IMR-90 (cell line): ENCODE measurements at regions of chr1 and their contacts with region 1.

Region 1: GRCh38 chr1:30801771-30802198 is 44.2 kb upstream of the LAPTM5 start:
- DNase-seq: peak; percentile 48
- ATAC-seq: peak; percentile 91
- H3K4me3 ChIP-seq: no peak overlapping the region
- H3K27ac ChIP-seq: no peak overlapping the region
- H3K4me1 ChIP-seq: peaks cover 9% of the 10 kb centered on the region; the same call in 1 of the 2 replicates
- H3K27me3 ChIP-seq: no peaks in the 10 kb centered on the region
- CTCF ChIP-seq: peak; percentile 96
- POLR2A ChIP-seq: peak; percentile 45; the same call in 1 of the 2 replicates
- RAD21 ChIP-seq: peak; percentile 98

Region 2: DNA sequence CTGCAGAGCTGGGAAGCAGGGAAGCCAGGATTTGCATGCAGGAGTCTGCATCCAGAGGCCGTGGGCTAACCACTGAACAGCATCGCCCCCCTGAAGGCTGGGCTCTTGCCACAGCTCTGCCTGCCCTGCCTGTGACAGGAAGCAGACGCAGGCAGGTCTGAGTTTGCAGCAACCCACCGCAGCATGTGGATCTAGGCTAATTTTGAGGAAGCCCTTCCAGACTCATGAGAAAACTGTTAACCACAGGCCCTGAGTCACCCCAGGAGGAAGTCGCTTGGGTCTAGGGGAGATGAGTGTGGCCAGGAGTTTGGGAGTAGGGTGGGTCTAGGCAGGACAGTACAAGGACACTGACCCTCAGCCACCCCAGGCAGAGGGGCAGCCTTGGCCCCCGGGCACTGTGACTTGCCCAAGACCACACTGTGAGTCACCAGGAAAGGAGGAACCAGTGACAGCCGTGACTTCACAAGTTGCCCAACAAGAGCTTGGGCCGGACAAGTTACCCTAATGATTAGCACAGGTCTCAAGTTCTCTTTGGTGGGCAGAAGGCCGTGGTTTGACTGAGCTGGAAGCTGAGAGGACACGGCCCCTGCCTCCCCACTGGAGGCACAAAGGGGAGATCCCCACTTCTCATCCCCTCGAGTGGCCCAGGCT is 45.1 kb before region 1 on chr1:
- CTCF ChIA-PET with region 1: no interaction called
- POLR2A ChIA-PET with region 1: no interaction called
- dilution Hi-C with region 1: no loop called
- in situ Hi-C with region 1: no loop called
- intact Hi-C with region 1: no loop called
- DNase-seq: peak; percentile 82
- ATAC-seq: peak; percentile 80
- H3K4me3 ChIP-seq: no peak overlapping the region
- H3K27ac ChIP-seq: no peak overlapping the region
- H3K4me1 ChIP-seq: peaks cover 6% of the 10 kb centered on the region
- H3K27me3 ChIP-seq: peaks cover 9% of the 10 kb centered on the region
- CTCF ChIP-seq: no peak
- POLR2A ChIP-seq: no peak
- RAD21 ChIP-seq: no peak

Region 3: GRCh38 chr1:30847358-30847972 is 45.7 kb after region 1 on chr1:
- CTCF ChIA-PET with region 1: no interaction called
- POLR2A ChIA-PET with region 1: no interaction called
- dilution Hi-C with region 1: no loop called
- in situ Hi-C with region 1: no loop called
- intact Hi-C with region 1: no loop called
- DNase-seq: peak; percentile 79
- ATAC-seq: peak; percentile 77
- H3K4me3 ChIP-seq: no peak overlapping the region
- H3K27ac ChIP-seq: peak overlapping the region; percentile 3; the same call in 1 of the 2 replicates
- H3K4me1 ChIP-seq: peaks cover 4% of the 10 kb centered on the region; the same call in 1 of the 2 replicates
- H3K27me3 ChIP-seq: peaks cover 11% of the 10 kb centered on the region
- CTCF ChIP-seq: no peak
- POLR2A ChIP-seq: no peak
- RAD21 ChIP-seq: no peak

Region 4: DNA sequence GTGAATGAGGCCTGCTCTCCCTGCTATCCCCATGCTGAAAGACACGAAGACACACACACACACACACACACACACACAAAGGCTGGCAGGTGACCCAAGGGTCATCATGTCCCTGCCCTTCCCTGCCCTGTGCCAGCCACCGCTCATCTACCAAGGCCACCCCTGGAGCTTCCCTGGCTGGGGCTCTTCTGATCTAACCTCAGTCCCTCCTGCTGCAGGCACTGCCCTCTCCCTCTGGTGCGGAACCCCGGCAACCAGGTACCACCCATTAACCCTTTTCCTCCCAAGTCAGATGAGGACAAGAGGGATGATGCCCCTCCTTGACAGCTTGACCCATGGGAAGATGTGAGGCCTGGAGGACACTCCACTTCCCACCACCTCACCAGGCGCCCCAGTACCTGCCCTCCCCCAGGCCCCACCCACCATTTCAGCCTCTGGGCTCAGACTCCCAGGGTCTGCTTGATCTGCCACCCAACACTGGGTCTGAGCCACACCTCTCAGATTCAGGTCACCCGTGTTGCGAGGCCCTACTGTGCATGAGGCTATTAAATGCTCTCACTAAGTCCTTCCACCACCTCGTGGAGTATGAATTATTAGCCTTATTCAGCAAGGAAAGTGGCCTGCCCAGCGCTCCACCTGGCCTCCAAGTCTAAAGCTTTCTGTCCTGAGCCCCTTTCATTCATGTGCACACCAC is 104.3 kb after region 1 on chr1:
- CTCF ChIA-PET with region 1: interaction called, 122 read pairs
- POLR2A ChIA-PET with region 1: no interaction called
- dilution Hi-C with region 1: loop called (anchors 25 kb)
- in situ Hi-C with region 1: loop called (anchors 5 kb)
- intact Hi-C with region 1: loop called (anchors 1 kb)
- DNase-seq: no peak
- ATAC-seq: no peak
- H3K4me3 ChIP-seq: no peak overlapping the region
- H3K27ac ChIP-seq: no peak overlapping the region
- H3K4me1 ChIP-seq: peaks cover 43% of the 10 kb centered on the region
- H3K27me3 ChIP-seq: no peaks in the 10 kb centered on the region
- CTCF ChIP-seq: no peak
- POLR2A ChIP-seq: no peak
- RAD21 ChIP-seq: no peak

Region 5: DNA sequence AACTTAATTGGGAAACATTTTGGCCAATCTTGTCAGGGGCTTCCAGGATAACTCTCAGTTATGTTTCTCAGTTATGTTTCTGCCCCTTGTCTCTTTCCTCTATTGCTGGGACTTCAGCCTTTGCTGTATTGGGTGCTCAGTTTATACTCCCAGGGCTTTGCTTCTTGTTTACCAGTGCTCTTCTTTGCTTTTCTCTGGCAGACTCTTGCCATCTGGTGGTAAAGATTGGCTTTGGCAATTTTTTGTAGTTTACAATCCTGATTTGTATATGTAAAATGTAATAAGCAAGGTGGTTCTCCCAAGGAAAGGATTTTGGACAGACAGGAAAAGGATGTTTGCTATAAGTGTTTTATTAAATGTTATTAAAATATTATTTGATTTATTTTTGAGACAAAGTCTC is 533.2 kb after region 1 on chr1:
- CTCF ChIA-PET with region 1: no interaction called
- POLR2A ChIA-PET with region 1: no interaction called
- dilution Hi-C with region 1: no loop called
- in situ Hi-C with region 1: no loop called
- intact Hi-C with region 1: loop called (anchors 10 kb)
- DNase-seq: peak; percentile 46
- ATAC-seq: peak; percentile 81
- H3K4me3 ChIP-seq: no peak overlapping the region
- H3K27ac ChIP-seq: no peak overlapping the region
- H3K4me1 ChIP-seq: no peaks in the 10 kb centered on the region
- H3K27me3 ChIP-seq: no peaks in the 10 kb centered on the region
- CTCF ChIP-seq: peak; percentile 51
- POLR2A ChIP-seq: no peak
- RAD21 ChIP-seq: peak; percentile 65